Heart right ventricle (tissue), 16 donors: ENCODE measurements at regions of chrX and their contacts with region 1.

Region 1: GRCh38 chrX:132631579-132632232 is 142.9 kb upstream of the MBNL3 start:
- DNase-seq: no peak
- ATAC-seq: peak in 1 of 8 donors; percentile 60
- H3K4me3 ChIP-seq: no peak overlapping the region
- H3K27ac ChIP-seq: no peak overlapping the region
- H3K4me1 ChIP-seq: no peaks in the 10 kb centered on the region
- H3K27me3 ChIP-seq: peaks cover 0 to 69% (median 0%) of the 10 kb centered on the region in 7 donors
- CTCF ChIP-seq: peak in 7 of 9 donors; percentile 41 to 58 (median 54)

Region 2: DNA sequence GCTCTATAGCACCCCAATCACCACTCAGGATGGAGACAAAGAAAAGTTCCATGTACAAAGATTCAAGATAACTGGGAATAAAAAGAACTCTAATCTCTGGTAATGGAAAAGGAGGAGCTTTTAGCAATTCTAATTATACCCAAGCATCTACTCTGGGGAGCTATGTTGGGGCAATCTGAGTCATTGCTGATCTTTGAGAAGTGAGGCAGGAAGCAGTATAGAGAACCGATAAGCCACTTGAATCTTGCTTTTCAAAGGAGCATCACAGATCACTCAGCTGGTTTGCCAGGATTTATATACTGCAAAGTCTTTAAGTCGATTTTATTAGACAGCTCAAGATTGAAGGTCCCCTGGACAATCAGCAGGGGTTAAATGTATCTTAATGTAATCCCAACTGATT is 1948.7 kb before region 1 on chrX:
- intact Hi-C with region 1: no loop called
- DNase-seq: no peak
- ATAC-seq: peak in 3 of 8 donors; percentile 34 to 58 (median 48)
- H3K4me3 ChIP-seq: no peak overlapping the region
- H3K27ac ChIP-seq: peak overlapping the region in 3 of 10 donors; percentile 41 to 44 (median 43)
- H3K4me1 ChIP-seq: peaks cover 0 to 17% (median 0%) of the 10 kb centered on the region in 9 donors
- H3K27me3 ChIP-seq: no peaks in the 10 kb centered on the region
- CTCF ChIP-seq: no peak

Region 3: GRCh38 chrX:132092439-132093065 is 539.2 kb before region 1 on chrX:
- intact Hi-C with region 1: loop called in 3 of 10 experiments (anchors 5 to 10 kb)
- DNase-seq: peak in 1 of 2 donors; percentile 43
- ATAC-seq: peak in 4 of 8 donors; percentile 44 to 76 (median 54)
- H3K4me3 ChIP-seq: no peak overlapping the region
- H3K27ac ChIP-seq: no peak overlapping the region
- H3K4me1 ChIP-seq: no peaks in the 10 kb centered on the region
- H3K27me3 ChIP-seq: peaks cover 0 to 80% (median 0%) of the 10 kb centered on the region in 7 donors
- CTCF ChIP-seq: peak; percentile 54 to 78 (median 70)

Region 4: GRCh38 chrX:132590350-132591026 is 41.2 kb before region 1 on chrX:
- intact Hi-C with region 1: no loop called
- DNase-seq: no peak
- ATAC-seq: no peak
- H3K4me3 ChIP-seq: no peak overlapping the region
- H3K27ac ChIP-seq: no peak overlapping the region
- H3K4me1 ChIP-seq: no peaks in the 10 kb centered on the region
- H3K27me3 ChIP-seq: peaks cover 0 to 47% (median 0%) of the 10 kb centered on the region in 7 donors
- CTCF ChIP-seq: no peak

Region 5: DNA sequence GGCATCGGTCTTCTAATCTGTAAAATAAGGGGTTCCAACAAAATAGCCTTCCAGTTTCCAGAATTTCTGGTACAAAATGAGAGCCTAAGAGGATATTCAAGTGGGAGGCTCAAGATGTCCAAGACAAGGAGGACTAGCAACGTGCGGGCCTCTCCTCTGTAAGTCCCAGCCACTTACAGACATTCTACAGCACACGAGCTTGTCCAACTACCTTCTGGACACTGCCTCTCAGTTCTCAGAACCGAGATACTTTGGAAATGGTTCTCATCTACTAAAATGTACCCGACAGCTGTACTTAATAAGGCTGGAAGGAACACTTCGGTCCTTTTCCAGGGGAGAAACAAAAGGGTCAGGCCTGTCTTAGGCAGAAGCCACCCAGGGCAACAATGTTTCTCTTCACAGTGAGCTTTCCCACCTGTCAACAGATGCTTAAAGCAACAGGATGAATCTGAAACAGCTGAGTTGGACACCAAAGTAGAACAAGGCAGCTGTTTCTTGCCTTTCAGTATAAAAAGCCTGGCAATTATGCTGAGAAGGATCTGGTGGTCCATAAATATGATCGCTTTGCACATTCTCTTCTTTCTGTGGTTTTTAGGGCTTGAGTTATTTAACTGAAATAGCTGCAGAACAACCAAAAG is 199.7 kb after region 1 on chrX:
- intact Hi-C with region 1: no loop called
- DNase-seq: no peak
- ATAC-seq: peak in 1 of 8 donors; percentile 66
- H3K4me3 ChIP-seq: no peak overlapping the region
- H3K27ac ChIP-seq: peak overlapping the region in 1 of 10 donors; percentile 9
- H3K4me1 ChIP-seq: no peaks in the 10 kb centered on the region
- H3K27me3 ChIP-seq: peaks cover 0 to 65% (median 0%) of the 10 kb centered on the region in 7 donors
- CTCF ChIP-seq: no peak